Panc1 (cell line): ENCODE measurements at regions of chr11 and their contacts with region 1.

Region 1: DNA sequence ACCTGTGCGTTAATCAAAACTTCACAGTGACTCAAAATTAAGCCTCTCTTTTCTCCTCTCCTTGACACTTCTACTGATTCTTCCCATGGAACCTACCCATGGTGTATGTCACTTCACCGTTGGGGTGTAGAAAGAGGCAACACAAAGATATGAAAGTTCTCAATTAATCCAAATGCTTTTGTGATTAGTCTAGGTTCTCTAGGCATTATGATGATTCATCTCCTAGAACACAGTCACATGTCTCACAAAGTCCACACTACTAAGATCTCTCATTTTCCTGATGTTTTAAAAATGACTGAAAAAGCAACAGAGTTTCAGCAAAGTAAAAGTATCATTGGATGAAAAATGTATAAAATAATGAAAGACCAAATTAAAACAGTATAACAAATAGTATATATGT is 13.7 kb upstream of the SCGB2A2 start:
- DNase-seq: no peak
- ATAC-seq: no peak
- H3K4me3 ChIP-seq: no peak overlapping the region
- H3K27ac ChIP-seq: no peak overlapping the region
- H3K4me1 ChIP-seq: no peaks in the 10 kb centered on the region
- H3K27me3 ChIP-seq: peaks cover 2% of the 10 kb centered on the region; the same call in 1 of the 2 replicates
- CTCF ChIP-seq: no peak

Region 2: DNA sequence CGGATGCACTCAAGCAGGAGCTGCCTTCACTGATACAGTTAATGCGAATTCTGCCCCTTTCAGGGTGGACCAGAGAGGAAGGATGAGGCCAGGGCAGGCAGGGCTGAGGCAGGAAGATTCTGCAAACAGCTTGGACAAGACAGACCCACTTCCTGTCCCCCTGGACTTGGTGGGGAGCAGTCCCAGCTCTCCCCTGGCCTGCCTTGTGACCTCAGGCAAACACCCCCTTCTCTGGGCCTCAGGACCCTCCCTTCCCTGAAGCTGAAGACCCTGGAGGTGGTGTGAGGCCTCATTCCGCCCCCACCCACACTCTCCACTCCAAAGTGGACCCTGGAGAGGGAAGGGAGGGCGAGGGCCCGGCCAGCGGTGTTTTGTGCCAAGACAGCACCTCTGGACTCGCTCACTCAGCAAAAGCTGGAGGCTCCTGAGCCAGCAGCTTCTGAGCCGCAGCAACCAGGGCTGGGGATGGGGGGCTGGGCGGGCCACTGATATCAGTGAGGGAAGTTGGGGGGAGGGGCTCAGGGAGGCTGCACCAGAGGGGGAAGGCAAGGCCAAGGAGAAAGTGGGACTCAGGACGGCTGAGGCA is 347.5 kb before region 1 on chr11:
- CTCF ChIA-PET with region 1: no interaction called
- POLR2A ChIA-PET with region 1: no interaction called
- in situ Hi-C with region 1: no loop called
- intact Hi-C with region 1: no loop called
- DNase-seq: no peak
- ATAC-seq: no peak
- H3K4me3 ChIP-seq: no peak overlapping the region
- H3K27ac ChIP-seq: no peak overlapping the region
- H3K4me1 ChIP-seq: no peaks in the 10 kb centered on the region
- H3K27me3 ChIP-seq: no peaks in the 10 kb centered on the region
- CTCF ChIP-seq: no peak

Region 3: GRCh38 chr11:62186195-62186594 is 70.1 kb before region 1 on chr11:
- CTCF ChIA-PET with region 1: no interaction called
- POLR2A ChIA-PET with region 1: no interaction called
- in situ Hi-C with region 1: no loop called
- intact Hi-C with region 1: no loop called
- DNase-seq: no peak
- ATAC-seq: no peak
- H3K4me3 ChIP-seq: no peak overlapping the region
- H3K27ac ChIP-seq: no peak overlapping the region
- H3K4me1 ChIP-seq: no peaks in the 10 kb centered on the region
- H3K27me3 ChIP-seq: peaks cover 12% of the 10 kb centered on the region; the same call in 1 of the 2 replicates
- CTCF ChIP-seq: no peak

Region 4: GRCh38 chr11:62223095-62223494 is 33.2 kb before region 1 on chr11:
- CTCF ChIA-PET with region 1: no interaction called
- POLR2A ChIA-PET with region 1: no interaction called
- in situ Hi-C with region 1: loop called (anchors 5 kb)
- intact Hi-C with region 1: no loop called
- DNase-seq: no peak
- ATAC-seq: no peak
- H3K4me3 ChIP-seq: no peak overlapping the region
- H3K27ac ChIP-seq: no peak overlapping the region
- H3K4me1 ChIP-seq: no peaks in the 10 kb centered on the region
- H3K27me3 ChIP-seq: no peaks in the 10 kb centered on the region
- CTCF ChIP-seq: no peak